A549 (cell line): ENCODE measurements at regions of chr9 and their contacts with region 1.

Region 1: DNA sequence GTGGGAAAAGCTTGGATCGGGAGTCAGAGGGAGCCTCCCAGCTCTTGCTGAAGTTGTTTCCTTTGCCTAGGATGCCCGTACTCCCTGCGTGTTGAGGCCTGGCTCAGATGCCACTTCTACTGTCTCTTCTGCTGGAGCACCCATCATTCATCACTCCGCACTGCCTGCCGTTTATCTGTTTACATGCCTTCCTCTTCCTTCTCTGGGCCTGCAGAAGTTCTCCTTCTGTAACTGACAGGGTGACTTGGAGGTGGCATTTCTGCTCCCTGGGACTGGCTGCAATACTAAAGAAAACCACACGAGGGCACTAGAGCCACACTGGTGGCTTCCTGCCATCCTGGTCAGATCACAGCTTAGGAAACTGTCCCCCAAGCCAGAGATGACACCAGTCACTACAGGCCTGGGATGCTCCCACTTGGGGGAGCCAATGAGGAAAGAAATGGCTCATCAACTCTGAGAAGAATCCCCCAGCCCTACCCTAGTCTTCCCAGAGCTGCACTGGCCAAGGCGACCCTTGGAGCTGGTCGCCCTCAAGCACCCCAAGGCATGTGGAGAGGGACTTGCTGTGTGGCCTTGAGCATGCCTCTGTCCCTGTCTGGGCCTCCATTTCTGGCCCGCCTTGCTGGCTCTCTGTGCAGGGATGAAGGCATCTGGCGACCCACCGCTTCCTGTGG is 9.7 kb upstream of the SLC25A51 start:
- DNase-seq: peak; percentile 78 to 86
- ATAC-seq: peak; percentile 73 to 85
- H3K4me3 ChIP-seq: no peak overlapping the region
- H3K27ac ChIP-seq: peak overlapping the region; percentile 7 to 73; a peak in 4 of 6 replicates
- H3K4me1 ChIP-seq: peaks cover 31% of the 10 kb centered on the region
- CTCF ChIP-seq: peak; percentile 96
- EP300 ChIP-seq: no peak
- POLR2A ChIP-seq: no peak
- RAD21 ChIP-seq: peak; percentile 99

Region 2: DNA sequence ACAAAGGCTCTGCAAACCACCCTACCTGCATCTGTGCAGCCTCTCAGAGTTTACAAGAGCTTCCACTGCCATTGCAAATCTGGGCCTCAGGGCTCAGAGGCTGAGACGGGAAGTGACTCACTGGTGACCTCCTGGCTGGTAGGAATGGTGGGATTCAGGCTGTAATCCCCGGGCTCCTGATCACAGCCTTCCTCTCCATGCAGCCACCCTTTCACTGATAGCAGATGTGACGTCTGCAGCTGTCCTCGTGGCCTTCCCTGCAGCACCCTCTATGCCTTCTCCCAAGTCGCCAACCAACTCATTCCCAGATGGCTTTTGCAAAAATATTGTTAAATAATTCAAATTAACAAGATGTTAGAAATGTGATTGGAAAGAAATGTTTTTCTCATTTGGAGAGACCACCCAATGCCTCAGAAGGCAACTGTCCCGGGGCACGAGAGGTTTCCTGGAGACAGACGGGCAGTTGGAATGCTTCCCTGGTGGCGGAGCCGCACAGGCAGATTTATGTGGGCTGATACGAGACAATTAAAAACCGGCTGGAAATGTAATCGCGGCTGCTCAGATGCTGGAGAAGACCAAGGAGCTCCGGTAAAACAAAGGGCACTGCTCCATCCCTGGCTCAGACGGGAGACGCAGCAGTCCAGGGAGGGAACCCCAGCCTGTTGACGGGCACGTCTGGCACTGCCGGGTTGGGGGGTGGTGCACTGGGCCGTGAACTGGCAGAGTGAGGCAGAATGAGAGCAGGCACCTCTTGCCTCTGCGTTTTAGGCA is 24.7 kb after region 1 on chr9:
- CTCF ChIA-PET with region 1: interaction called, 15 read pairs
- POLR2A ChIA-PET with region 1: no interaction called
- DNase-seq: no peak
- ATAC-seq: no peak; a peak in 1 of 6 replicates
- H3K4me3 ChIP-seq: no peak overlapping the region
- H3K27ac ChIP-seq: peak overlapping the region in 1 of 2 experiments; percentile 63; a peak in 2 of 6 replicates
- H3K4me1 ChIP-seq: peaks cover 42% of the 10 kb centered on the region
- CTCF ChIP-seq: no peak
- EP300 ChIP-seq: no peak
- POLR2A ChIP-seq: no peak
- RAD21 ChIP-seq: no peak

Region 3: DNA sequence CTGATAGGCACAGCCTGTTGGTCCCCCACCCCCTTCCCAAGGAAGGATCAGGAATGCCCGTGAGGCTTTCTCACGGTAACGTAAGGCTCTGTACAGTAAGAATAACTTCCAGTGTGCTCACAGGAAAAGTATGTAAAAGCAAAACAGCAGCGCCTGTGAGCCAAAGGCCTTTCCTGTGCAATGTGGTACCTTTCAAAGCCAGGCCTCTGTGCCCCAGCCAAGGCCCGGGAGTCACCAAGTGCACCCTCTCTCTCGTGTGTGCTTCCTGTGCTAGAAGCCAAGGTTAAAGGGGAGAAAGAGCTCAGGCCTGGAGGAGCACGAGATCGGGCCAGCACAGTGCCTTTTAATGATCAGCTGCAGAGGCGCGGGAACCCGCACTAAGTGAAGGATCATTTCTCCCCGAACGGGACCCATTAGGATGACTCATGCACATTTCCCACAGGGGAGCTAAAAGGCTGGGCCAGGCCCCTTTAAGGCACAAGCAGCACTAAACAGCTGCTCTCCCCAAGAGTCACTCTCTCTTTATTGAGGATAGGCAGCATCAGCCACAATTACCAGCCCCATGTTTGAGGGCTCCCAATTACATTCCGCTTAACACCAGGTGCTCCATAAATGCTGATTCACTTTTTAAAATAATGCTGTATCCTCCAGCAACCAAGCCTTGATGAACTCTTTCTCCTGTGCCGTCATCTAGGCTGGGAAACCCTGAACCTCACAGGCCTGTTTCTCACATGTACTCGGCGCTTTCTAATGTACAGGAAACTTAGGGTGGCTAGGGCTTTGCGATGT is 112.6 kb after region 1 on chr9:
- CTCF ChIA-PET with region 1: interaction called, 22 read pairs
- POLR2A ChIA-PET with region 1: no interaction called
- DNase-seq: peak; percentile 62 to 68
- ATAC-seq: peak; percentile 60 to 73
- H3K4me3 ChIP-seq: no peak overlapping the region
- H3K27ac ChIP-seq: peak overlapping the region; percentile 84 to 97
- H3K4me1 ChIP-seq: peaks cover 95% of the 10 kb centered on the region
- CTCF ChIP-seq: no peak
- EP300 ChIP-seq: no peak
- POLR2A ChIP-seq: no peak
- RAD21 ChIP-seq: no peak; a peak in 1 of 5 replicates

Region 4: GRCh38 chr9:38088006-38088925 is 174.6 kb after region 1 on chr9:
- CTCF ChIA-PET with region 1: interaction called, 50 read pairs
- POLR2A ChIA-PET with region 1: no interaction called
- DNase-seq: peak; percentile 49 to 78
- ATAC-seq: peak; percentile 73 to 90
- H3K4me3 ChIP-seq: no peak overlapping the region
- H3K27ac ChIP-seq: no peak overlapping the region
- H3K4me1 ChIP-seq: no peaks in the 10 kb centered on the region
- CTCF ChIP-seq: peak; percentile 82
- EP300 ChIP-seq: no peak
- POLR2A ChIP-seq: no peak
- RAD21 ChIP-seq: peak; percentile 79 to 83

Region 5: DNA sequence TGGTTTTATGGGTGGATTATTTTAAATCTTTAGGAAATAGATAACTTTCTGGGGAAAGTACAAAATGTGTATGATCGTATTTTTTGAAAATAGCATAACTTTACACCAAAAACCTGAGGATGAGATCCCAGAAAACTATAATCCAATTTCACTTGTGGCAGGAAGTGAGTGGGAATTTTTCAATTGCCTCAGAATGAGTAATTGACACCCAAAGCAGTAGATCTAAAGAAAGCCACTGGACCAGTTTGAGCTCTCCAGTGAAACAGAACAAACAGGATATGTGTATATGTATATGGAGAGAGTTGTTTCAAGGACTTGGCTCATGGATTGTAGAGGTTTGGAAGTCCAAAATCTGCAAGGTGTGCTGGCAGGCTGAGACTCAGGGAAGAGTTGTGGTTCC is 264.6 kb after region 1 on chr9:
- CTCF ChIA-PET with region 1: no interaction called
- POLR2A ChIA-PET with region 1: no interaction called
- DNase-seq: no peak
- ATAC-seq: no peak
- H3K4me3 ChIP-seq: no peak overlapping the region
- H3K27ac ChIP-seq: no peak overlapping the region
- H3K4me1 ChIP-seq: no peaks in the 10 kb centered on the region
- CTCF ChIP-seq: no peak
- EP300 ChIP-seq: no peak
- POLR2A ChIP-seq: no peak
- RAD21 ChIP-seq: no peak

Region 6: GRCh38 chr9:38339087-38339486 is 425.5 kb after region 1 on chr9:
- CTCF ChIA-PET with region 1: interaction called, 15 read pairs
- POLR2A ChIA-PET with region 1: no interaction called
- DNase-seq: no peak
- ATAC-seq: no peak; a peak in 1 of 6 replicates
- H3K4me3 ChIP-seq: no peak overlapping the region
- H3K27ac ChIP-seq: no peak overlapping the region
- H3K4me1 ChIP-seq: peaks cover 5% of the 10 kb centered on the region; the same call in 1 of the 3 replicates
- CTCF ChIP-seq: no peak
- EP300 ChIP-seq: no peak
- POLR2A ChIP-seq: no peak
- RAD21 ChIP-seq: no peak

Region 7: GRCh38 chr9:38401994-38402393 is 488.4 kb after region 1 on chr9:
- CTCF ChIA-PET with region 1: interaction called, 14 read pairs
- POLR2A ChIA-PET with region 1: no interaction called
- DNase-seq: no peak
- ATAC-seq: no peak
- H3K4me3 ChIP-seq: no peak overlapping the region
- H3K27ac ChIP-seq: no peak overlapping the region
- H3K4me1 ChIP-seq: no peaks in the 10 kb centered on the region
- CTCF ChIP-seq: no peak
- EP300 ChIP-seq: no peak
- POLR2A ChIP-seq: no peak
- RAD21 ChIP-seq: no peak